AG04449 (cell line): ENCODE measurements at regions of chr6 and their contacts with region 1.

Region 1: GRCh38 chr6:44265007-44265721 is at the start of gene NFKBIE:
- DNase-seq: peak; percentile 50
- H3K4me3 ChIP-seq: peak within 1 kb of the TSS; percentile 80
- CTCF ChIP-seq: peak; percentile 26

Region 2: GRCh38 chr6:44180406-44180805 is 84.8 kb before region 1 on chr6:
- CTCF ChIA-PET with region 1: no interaction called
- POLR2A ChIA-PET with region 1: no interaction called
- DNase-seq: no peak
- H3K4me3 ChIP-seq: no peak overlapping the region
- CTCF ChIP-seq: no peak

Region 3: GRCh38 chr6:44275749-44276648 is 10.8 kb after region 1 on chr6:
- CTCF ChIA-PET with region 1: interaction called, 45 read pairs
- POLR2A ChIA-PET with region 1: no interaction called
- DNase-seq: no peak
- H3K4me3 ChIP-seq: no peak overlapping the region
- CTCF ChIP-seq: no peak

Region 4: DNA sequence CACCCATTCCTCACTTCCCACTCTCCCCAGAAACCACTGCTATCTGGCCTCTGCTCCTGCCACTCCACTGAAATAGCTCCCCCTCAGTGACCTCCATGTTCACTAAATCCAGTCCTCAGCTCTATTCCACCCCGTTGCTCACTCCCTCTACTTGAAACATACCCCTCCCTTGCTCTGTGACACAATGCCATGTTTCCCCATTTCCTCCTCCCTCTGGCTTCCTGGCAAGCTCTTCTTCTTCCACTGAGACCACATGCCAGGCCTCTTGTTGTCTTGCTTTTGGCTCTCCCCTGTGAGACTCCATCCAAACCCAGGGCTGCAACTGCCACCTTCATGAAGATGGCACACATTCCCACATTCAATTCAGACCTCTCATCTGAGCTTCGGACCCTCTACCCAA is 19.0 kb after region 1 on chr6:
- CTCF ChIA-PET with region 1: interaction called, 45 read pairs
- POLR2A ChIA-PET with region 1: no interaction called
- DNase-seq: no peak
- H3K4me3 ChIP-seq: no peak overlapping the region
- CTCF ChIP-seq: no peak

Region 5: GRCh38 chr6:44289726-44290260 is 24.6 kb after region 1 on chr6:
- CTCF ChIA-PET with region 1: interaction called, 158 read pairs
- POLR2A ChIA-PET with region 1: no interaction called
- DNase-seq: no peak
- H3K4me3 ChIP-seq: no peak overlapping the region
- CTCF ChIP-seq: no peak

Region 6: GRCh38 chr6:44304282-44305199 is 39.4 kb after region 1 on chr6:
- CTCF ChIA-PET with region 1: interaction called, 158 read pairs
- POLR2A ChIA-PET with region 1: no interaction called
- DNase-seq: no peak
- H3K4me3 ChIP-seq: no peak overlapping the region
- CTCF ChIP-seq: peak; percentile 78

Region 7: DNA sequence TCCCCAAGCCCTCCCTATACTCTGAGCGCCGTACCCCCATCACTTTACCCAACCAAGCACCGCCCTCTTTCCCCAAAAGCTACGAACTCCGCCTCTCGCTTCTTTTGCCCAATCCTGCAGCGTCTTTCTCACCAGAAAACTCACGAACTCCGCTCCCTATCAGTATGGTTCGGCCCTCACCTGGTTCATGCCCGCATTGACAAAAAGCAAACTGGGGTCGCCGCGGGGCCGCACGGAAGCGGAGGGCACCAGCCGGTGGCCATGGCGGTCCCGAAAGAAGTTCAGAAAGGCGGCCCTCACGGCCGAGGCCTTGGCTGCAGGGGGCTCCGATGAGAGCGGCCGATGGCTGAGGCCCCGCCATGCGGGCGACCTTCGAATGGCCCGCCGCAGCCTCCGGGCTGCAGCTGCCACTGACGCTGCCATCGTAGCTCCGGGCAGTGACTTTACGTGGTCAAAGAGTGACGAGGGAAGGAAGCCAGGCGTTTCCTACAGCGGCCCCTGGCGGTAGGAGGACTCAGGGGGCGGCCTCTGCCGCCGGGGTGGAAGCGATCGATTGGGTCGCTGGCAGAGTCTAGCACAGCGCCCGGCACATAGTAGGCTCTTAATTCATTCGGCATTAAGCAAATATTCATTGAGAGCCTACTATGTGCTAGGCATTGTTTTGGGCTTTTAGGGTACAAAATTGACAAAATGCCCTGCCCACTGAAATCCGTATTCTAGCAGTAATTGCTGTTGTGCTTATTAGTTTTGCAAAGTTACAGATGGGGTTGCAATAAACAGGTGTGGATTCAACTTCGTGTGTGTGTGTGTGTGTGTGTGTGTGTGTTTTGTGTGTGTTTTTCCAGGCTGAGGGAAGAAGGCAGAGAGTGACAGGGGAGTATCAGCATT is 48.0 kb after region 1 on chr6 and contains the start of gene AARS2:
- CTCF ChIA-PET with region 1: interaction called, 158 read pairs
- POLR2A ChIA-PET with region 1: no interaction called
- DNase-seq: peak; percentile 37
- H3K4me3 ChIP-seq: peak within 1 kb of the TSS; percentile 94
- CTCF ChIP-seq: peak; percentile 97

Region 8: GRCh38 chr6:44338228-44339122 is 73.3 kb after region 1 on chr6:
- CTCF ChIA-PET with region 1: interaction called, 234 read pairs
- POLR2A ChIA-PET with region 1: no interaction called
- DNase-seq: no peak
- H3K4me3 ChIP-seq: no peak overlapping the region
- CTCF ChIP-seq: peak; percentile 75

Region 9: DNA sequence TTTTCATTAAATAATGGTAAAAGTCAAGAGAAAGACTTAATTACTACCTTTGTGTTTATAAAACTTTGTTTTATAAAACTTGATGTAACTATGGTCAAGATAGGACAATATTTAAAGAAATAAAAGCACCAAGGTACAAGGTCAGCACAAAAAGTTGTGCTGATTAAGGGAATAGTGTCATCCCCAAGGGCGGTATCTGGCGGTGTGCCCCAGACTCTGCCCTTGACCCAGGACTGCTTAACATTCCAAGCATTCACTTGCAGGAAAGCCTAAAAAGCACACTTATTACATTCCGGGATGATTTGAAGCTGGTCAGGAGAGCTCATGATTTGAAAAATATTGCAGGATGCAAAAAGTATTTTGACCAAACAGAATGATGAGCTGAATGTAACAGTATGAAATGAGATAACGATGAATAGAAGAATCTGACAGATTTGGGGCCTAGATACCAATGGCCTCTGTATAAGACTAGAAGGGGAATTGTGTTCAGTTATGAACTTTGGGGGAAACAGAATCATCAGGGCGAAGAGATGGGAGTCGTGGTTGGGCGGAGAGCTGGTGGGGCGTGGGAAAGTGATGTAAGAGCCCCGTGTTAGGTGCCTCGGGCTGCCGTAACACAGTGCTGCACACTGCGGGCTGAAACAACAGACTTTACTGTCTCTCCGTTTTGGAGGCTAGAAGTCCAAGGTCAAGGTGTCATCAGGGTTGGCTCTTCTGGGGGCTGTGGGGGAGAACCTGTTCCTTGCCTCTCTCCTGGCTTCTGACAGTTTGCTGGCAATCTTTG is 199.6 kb after region 1 on chr6:
- CTCF ChIA-PET with region 1: no interaction called
- POLR2A ChIA-PET with region 1: no interaction called
- DNase-seq: no peak
- H3K4me3 ChIP-seq: no peak overlapping the region
- CTCF ChIP-seq: no peak